ENCODE measurements at regions of chr4 and their contacts with region 1.

Region 1: GRCh38 chr4:110005461-110006056 is 92.9 kb downstream of the EGF start:
- DNase-seq: peak; percentile 41
- H3K4me3 ChIP-seq: no peak overlapping the region
- CTCF ChIP-seq: peak; percentile 61

Region 2: GRCh38 chr4:109931318-109931717 is 74.2 kb before region 1 on chr4:
- CTCF ChIA-PET with region 1: no interaction called
- POLR2A ChIA-PET with region 1: no interaction called
- DNase-seq: no peak
- H3K4me3 ChIP-seq: no peak overlapping the region
- CTCF ChIP-seq: no peak

Region 3: DNA sequence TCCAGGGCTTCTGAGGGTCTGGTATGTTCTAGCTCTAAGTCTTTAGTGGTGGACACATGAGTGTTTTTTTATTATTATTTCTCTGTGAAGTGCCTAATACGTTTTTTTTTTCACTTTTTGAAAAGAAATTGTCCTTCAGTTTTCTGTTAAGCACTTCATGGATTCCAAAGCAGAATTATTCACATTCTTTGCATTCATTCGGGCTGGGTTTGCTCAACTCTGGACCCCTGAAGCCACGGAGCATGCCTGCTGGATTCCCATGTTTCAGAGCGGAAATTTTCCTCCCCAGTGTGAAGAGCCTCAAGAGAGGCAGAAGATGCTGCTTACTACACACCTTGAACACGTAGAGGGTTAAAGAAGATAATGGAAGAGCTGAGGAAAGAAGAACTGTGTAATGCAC is 14.6 kb after region 1 on chr4:
- CTCF ChIA-PET with region 1: interaction called, 37 read pairs
- POLR2A ChIA-PET with region 1: no interaction called
- DNase-seq: no peak
- H3K4me3 ChIP-seq: no peak overlapping the region
- CTCF ChIP-seq: no peak

Region 4: GRCh38 chr4:110088670-110089069 is 83.1 kb after region 1 on chr4:
- CTCF ChIA-PET with region 1: no interaction called
- POLR2A ChIA-PET with region 1: no interaction called
- DNase-seq: no peak
- H3K4me3 ChIP-seq: no peak overlapping the region
- CTCF ChIP-seq: no peak

Region 5: GRCh38 chr4:110193822-110194761 is 188.5 kb after region 1 on chr4:
- CTCF ChIA-PET with region 1: interaction called, 15 read pairs
- POLR2A ChIA-PET with region 1: no interaction called
- DNase-seq: peak; percentile 85
- H3K4me3 ChIP-seq: no peak overlapping the region
- CTCF ChIP-seq: no peak

Region 6: GRCh38 chr4:110310795-110311194 is 305.2 kb after region 1 on chr4:
- CTCF ChIA-PET with region 1: interaction called, 13 read pairs
- POLR2A ChIA-PET with region 1: no interaction called
- DNase-seq: no peak
- H3K4me3 ChIP-seq: no peak overlapping the region
- CTCF ChIP-seq: no peak